HEK293T (cell line): ENCODE measurements at regions of chr17 and their contacts with region 1.

Region 1: DNA sequence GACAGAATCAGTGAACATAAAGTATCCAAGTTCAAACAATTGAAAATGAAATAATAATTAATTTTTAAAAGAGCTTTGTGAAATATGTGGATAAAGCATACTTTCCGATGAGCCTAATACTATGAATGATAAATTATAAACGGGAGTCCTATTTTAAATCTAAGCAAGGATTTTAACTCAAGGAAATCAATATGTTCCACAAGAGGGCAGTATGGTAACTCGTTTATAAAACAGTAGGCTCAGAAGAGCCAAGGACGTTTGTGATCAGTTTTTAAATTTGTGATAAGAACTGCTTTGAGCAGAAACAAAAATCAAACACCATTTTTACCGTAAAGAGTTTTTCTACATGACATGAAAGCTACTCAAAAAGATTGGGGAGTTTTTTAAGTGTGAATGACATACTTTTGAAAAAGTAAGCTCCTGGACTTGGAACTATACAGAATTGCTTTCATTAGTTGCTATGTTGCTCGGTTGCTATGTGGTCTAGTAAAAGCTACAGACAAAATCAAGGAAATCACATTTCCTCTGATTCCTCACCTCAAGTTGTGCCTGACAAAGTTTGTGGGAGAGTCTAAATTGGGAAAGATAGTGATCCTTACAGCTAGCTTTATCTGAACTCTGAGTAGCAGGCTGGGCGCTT is 11.8 kb upstream of the TEKT1 start:
- DNase-seq: peak; percentile 21

Region 2: DNA sequence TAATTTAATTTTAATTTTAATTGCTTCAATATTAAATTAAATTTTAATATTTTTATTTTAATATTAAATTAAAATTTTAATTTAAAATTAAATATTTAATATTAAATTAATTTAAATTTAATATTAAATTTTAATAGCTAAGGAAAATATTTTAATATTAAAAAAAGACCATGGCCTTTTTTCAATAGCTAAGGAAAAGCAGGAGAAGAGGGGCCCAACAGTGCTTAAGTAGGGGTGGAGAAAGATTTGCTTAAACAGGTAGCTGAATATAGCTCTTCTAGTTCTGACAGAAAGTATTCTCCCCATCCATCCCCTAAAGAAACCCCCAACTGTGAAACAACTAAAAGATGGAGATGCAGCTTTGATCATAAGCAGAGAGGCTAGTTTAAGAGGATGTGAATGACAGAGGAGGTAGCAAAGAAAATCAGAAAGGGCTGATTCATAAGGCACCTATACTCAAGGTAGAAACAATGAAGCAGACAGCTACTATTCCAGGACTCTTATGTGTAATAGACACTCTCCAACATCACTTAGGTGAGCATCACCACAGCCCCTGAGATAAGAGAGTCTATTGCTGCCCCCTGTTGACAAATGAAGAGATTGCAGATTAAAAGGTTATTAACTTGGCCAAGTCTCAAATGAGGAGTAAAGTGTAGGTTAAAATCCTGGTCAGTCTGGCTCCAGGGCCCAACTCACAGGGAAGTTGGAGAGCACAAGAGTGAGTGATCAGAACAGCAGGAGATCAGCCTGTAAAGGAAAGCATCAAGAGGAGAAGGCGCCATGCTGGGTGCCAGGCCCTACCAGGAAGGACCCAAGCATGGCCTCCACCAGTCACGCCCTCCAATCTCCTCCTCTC is 161.3 kb after region 1 on chr17:
- CTCF ChIA-PET with region 1: interaction called, 15 read pairs
- POLR2A ChIA-PET with region 1: no interaction called
- DNase-seq: peak; percentile 67